Esophagus squamous epithelium (tissue), 5 donors: ENCODE measurements at regions of chr18 and their contacts with region 1.

Region 1: DNA sequence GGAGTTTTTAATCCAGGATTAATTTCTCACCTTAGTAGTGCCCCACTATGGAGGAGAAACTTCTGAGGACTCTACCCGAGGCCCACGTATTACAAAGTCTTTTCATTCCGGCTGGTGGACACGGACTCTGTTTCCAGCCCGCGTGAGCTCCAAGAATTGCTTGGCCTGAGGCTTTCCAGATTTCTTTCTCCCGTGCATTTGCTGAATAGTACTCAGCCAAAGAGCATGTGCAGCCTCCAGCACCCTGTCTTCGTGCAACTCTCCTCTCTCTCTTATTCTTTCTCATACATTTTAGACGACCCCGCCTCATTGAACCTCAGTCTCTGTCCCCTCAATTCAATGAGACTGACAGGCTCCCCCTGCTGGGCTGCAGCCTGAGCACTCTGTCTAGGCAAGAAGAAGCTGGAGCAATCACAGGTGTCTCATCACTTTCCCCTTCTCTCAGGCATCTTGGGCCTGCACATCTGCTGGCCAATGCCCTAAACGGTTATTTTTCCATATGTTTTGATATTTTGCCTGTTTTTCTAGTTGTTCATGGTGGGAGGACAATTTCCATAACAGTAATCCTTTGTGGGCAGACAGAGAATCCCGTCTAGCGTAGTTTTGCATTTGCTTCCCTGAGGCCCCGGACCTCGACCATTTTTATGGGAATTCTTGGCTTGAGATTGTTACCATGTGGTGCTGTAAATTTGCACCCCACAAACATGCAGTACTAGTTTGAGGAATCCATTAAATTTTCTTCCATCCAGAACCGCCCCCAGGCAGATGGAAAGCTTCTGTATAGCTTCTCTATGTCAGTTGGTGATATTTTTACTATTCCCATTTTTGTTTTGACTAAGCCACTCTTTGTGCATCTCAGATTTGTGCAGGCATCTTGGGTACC is 50.1 kb upstream of the LPIN2 start:
- DNase-seq: no peak
- H3K4me3 ChIP-seq: peak overlapping the region in 2 of 4 donors; percentile 10 to 13
- H3K27ac ChIP-seq: no peak overlapping the region
- H3K4me1 ChIP-seq: peaks cover 6 to 41% (median 17%) of the 10 kb centered on the region in 3 donors
- H3K27me3 ChIP-seq: peaks cover 0 to 4% (median 0%) of the 10 kb centered on the region in 4 donors
- CTCF ChIP-seq: peak; percentile 36 to 70 (median 60)
- POLR2A ChIP-seq: no peak

Region 2: GRCh38 chr18:2920546-2921343 is 142.3 kb before region 1 on chr18:
- intact Hi-C with region 1: loop called (anchors 10 kb)
- DNase-seq: no peak
- H3K4me3 ChIP-seq: no peak overlapping the region
- H3K27ac ChIP-seq: no peak overlapping the region
- H3K4me1 ChIP-seq: peaks cover 0 to 20% (median 0%) of the 10 kb centered on the region in 3 donors
- H3K27me3 ChIP-seq: no peaks in the 10 kb centered on the region
- CTCF ChIP-seq: no peak
- POLR2A ChIP-seq: no peak